Activated T-helper 2 cell treated with anti-CD3 and anti-CD28 coated beads, Interferon-gamma antibody, Interleukin-2, Interleukin-4, amounts not matched to agents 10 μg/mL and 5 μg/mL and 100 μg/mL, durations not matched to agents 14 hours and 24 hours and 36 hours (primary cell): ENCODE measurements at regions of chr14 and their contacts with region 1.

Region 1: DNA sequence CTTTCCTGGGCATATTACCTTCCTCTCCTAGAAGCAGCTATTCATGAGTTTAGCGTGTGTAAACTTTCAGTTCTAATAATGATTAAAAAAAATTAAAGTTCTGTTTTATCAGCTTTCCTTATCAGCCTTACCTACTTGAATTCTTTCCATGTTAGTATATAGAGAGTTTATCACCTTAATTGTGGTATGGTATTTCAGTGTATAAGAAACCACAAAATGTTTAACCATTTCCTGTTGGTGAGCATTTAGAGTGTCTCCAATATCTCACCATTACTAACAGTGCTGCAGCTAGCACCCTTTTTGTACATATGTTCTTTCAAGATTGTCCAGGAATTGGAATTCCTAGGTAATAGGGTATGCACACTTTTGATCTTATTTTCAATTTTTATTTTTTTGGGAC is 89.5 kb downstream of the FBXO33 start:
- DNase-seq: no peak
- H3K4me3 Mint-ChIP-seq: no peak overlapping the region
- H3K27ac Mint-ChIP-seq: no peak overlapping the region
- H3K4me1 Mint-ChIP-seq: peaks cover 25% of the 10 kb centered on the region
- H3K27me3 Mint-ChIP-seq: no peaks in the 10 kb centered on the region

Region 2: DNA sequence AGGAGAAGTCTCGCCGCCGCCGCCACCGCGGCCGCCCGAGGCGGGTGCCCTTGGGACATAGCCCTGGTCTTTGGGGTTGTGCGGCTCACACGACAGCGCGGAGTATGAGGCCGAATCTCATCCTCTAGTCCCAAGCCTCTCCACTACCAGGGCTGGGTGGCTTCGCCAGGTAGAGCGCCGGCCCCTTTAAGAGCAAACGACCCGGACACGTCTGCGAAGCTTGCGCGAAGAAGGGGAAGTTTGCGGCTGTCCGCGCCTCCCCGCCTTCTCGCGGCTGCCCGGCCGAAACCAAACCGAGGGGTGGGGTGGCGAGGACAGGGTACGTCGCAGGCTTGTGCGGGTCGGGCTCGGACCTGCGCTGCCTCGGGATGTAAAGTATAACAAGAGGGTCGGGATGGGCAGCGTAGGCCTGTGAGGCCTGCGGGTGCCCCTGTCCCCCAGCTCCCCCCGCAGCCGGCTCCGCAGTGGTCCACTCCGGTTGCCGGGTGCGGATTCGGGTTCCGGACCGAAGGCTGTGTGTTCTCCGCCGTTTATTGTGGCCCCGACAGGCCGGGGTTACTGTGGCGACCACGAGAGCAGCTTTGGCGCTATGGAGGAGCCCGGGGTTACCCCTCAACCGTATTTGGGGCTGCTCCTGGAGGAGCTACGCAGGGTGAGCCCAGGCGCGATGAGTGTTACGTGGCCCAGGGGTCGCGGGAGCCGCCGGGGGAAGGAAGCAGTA is 75.7 kb before region 1 on chr14:
- intact Hi-C with region 1: loop called (anchors 5 kb)
- DNase-seq: peak; percentile 73
- H3K4me3 Mint-ChIP-seq: peak overlapping the region; percentile 75
- H3K27ac Mint-ChIP-seq: peak overlapping the region; percentile 93
- H3K4me1 Mint-ChIP-seq: peaks cover 43% of the 10 kb centered on the region
- H3K27me3 Mint-ChIP-seq: no peaks in the 10 kb centered on the region

Region 3: GRCh38 chr14:39383026-39383660 is 40.4 kb after region 1 on chr14:
- intact Hi-C with region 1: loop called (anchors 1 kb)
- DNase-seq: no peak
- H3K4me3 Mint-ChIP-seq: no peak overlapping the region
- H3K27ac Mint-ChIP-seq: peak overlapping the region; percentile 36
- H3K4me1 Mint-ChIP-seq: peaks cover 37% of the 10 kb centered on the region
- H3K27me3 Mint-ChIP-seq: no peaks in the 10 kb centered on the region

Region 4: GRCh38 chr14:39603942-39604341 is 261.2 kb after region 1 on chr14:
- intact Hi-C with region 1: no loop called
- DNase-seq: no peak
- H3K4me3 Mint-ChIP-seq: no peak overlapping the region
- H3K27ac Mint-ChIP-seq: no peak overlapping the region
- H3K4me1 Mint-ChIP-seq: no peaks in the 10 kb centered on the region
- H3K27me3 Mint-ChIP-seq: no peaks in the 10 kb centered on the region